ENCODE measurements at regions of chr12 and their contacts with region 1.

Region 1: DNA sequence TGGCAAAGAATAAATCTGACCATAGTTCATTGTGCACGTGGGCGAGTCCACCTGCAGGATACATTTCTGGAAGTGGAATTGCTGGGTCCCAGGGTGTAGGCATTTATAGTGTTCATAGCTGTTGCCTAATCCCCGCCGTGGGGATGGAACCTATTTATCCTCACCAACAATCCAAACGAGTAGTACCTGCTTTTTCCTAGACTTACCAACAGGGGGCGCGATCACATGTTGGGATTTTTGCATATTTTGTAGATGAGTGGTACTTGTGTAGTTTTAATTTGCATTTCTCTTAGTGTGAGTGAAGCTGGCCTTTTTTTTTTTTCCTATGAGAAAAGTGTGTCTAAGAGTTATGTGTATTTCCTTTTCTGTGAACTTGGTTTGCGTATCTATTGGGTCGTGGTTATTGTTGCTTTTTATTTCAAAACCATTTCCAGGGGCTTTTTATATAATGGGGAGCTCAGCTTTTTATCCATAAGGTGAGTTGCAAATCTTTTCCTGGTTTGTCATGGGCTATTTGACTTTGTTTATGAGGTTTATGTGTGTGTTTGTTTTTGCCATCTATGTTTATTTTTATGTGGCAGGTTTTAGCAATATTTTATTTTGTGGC is 67.2 kb downstream of the CCDC92 start:
- DNase-seq: peak; percentile 68
- H3K4me3 ChIP-seq: no peak overlapping the region
- H3K27ac ChIP-seq: no peak overlapping the region
- H3K27me3 ChIP-seq: peaks cover 4% of the 10 kb centered on the region
- CTCF ChIP-seq: peak; percentile 79

Region 2: GRCh38 chr12:123813349-123813748 is 92.1 kb before region 1 on chr12:
- CTCF ChIA-PET with region 1: no interaction called
- POLR2A ChIA-PET with region 1: no interaction called
- DNase-seq: no peak
- H3K4me3 ChIP-seq: no peak overlapping the region
- H3K27ac ChIP-seq: no peak overlapping the region
- H3K27me3 ChIP-seq: peaks cover 2% of the 10 kb centered on the region
- CTCF ChIP-seq: no peak

Region 3: GRCh38 chr12:123916729-123917128 is 11.3 kb after region 1 on chr12:
- CTCF ChIA-PET with region 1: interaction called, 24 read pairs
- POLR2A ChIA-PET with region 1: no interaction called
- DNase-seq: no peak
- H3K4me3 ChIP-seq: no peak overlapping the region
- H3K27ac ChIP-seq: no peak overlapping the region
- H3K27me3 ChIP-seq: no peaks in the 10 kb centered on the region
- CTCF ChIP-seq: no peak

Region 4: GRCh38 chr12:123931686-123932321 is 26.4 kb after region 1 on chr12:
- CTCF ChIA-PET with region 1: interaction called, 13 read pairs
- POLR2A ChIA-PET with region 1: no interaction called
- DNase-seq: no peak
- H3K4me3 ChIP-seq: no peak overlapping the region
- H3K27ac ChIP-seq: no peak overlapping the region
- H3K27me3 ChIP-seq: no peaks in the 10 kb centered on the region
- CTCF ChIP-seq: no peak

Region 5: GRCh38 chr12:123942238-123942653 is 36.8 kb after region 1 on chr12:
- CTCF ChIA-PET with region 1: interaction called, 19 read pairs
- POLR2A ChIA-PET with region 1: no interaction called
- DNase-seq: peak; percentile 68
- H3K4me3 ChIP-seq: no peak overlapping the region; the same call in 1 of the 2 replicates
- H3K27ac ChIP-seq: peak overlapping the region; percentile 89
- H3K27me3 ChIP-seq: no peaks in the 10 kb centered on the region
- CTCF ChIP-seq: no peak

Region 6: GRCh38 chr12:123965382-123965781 is 60.0 kb after region 1 on chr12:
- CTCF ChIA-PET with region 1: interaction called, 13 read pairs
- POLR2A ChIA-PET with region 1: no interaction called
- DNase-seq: no peak
- H3K4me3 ChIP-seq: no peak overlapping the region
- H3K27ac ChIP-seq: no peak overlapping the region
- H3K27me3 ChIP-seq: no peaks in the 10 kb centered on the region
- CTCF ChIP-seq: no peak

Region 7: GRCh38 chr12:123983822-123984485 is 78.5 kb after region 1 on chr12:
- CTCF ChIA-PET with region 1: interaction called, 17 read pairs
- POLR2A ChIA-PET with region 1: no interaction called
- DNase-seq: no peak
- H3K4me3 ChIP-seq: no peak overlapping the region
- H3K27ac ChIP-seq: no peak overlapping the region
- H3K27me3 ChIP-seq: no peaks in the 10 kb centered on the region
- CTCF ChIP-seq: peak; percentile 85